Activated T-helper 2 cell treated with anti-CD3 and anti-CD28 coated beads, Interferon-gamma antibody, Interleukin-2, Interleukin-4, amounts not matched to agents 10 μg/mL and 5 μg/mL and 100 μg/mL, durations not matched to agents 14 hours and 24 hours and 36 hours (primary cell): ENCODE measurements at regions of chr5 and their contacts with region 1.

Region 1: GRCh38 chr5:138077065-138077696 is 6.7 kb upstream of the WNT8A start:
- DNase-seq: peak; percentile 19
- H3K4me3 Mint-ChIP-seq: no peak overlapping the region
- H3K27ac Mint-ChIP-seq: no peak overlapping the region
- H3K4me1 Mint-ChIP-seq: peaks cover 12% of the 10 kb centered on the region
- H3K27me3 Mint-ChIP-seq: no peaks in the 10 kb centered on the region

Region 2: GRCh38 chr5:138128334-138128733 is 51.2 kb after region 1 on chr5:
- intact Hi-C with region 1: loop called (anchors 1 kb)
- DNase-seq: no peak
- H3K4me3 Mint-ChIP-seq: no peak overlapping the region
- H3K27ac Mint-ChIP-seq: no peak overlapping the region
- H3K4me1 Mint-ChIP-seq: no peaks in the 10 kb centered on the region
- H3K27me3 Mint-ChIP-seq: peaks cover 15% of the 10 kb centered on the region